ENCODE measurements at regions of chr19 and their contacts with region 1.

Region 1: GRCh38 chr19:2096480-2097329 is at the start of gene IZUMO4:
- DNase-seq: peak; percentile 99
- CTCF ChIP-seq: peak; percentile 36

Region 2: GRCh38 chr19:1956868-1957492 is 139.7 kb before region 1 on chr19:
- CTCF ChIA-PET with region 1: no interaction called
- POLR2A ChIA-PET with region 1: no interaction called
- DNase-seq: no peak
- CTCF ChIP-seq: no peak

Region 3: GRCh38 chr19:2084993-2085720 is 11.5 kb before region 1 on chr19:
- CTCF ChIA-PET with region 1: interaction called, 7 read pairs
- POLR2A ChIA-PET with region 1: interaction called, 13 read pairs
- DNase-seq: peak; percentile 88
- CTCF ChIP-seq: no peak